MCF 10A (cell line): ENCODE measurements at regions of chr3 and their contacts with region 1.

Region 1: DNA sequence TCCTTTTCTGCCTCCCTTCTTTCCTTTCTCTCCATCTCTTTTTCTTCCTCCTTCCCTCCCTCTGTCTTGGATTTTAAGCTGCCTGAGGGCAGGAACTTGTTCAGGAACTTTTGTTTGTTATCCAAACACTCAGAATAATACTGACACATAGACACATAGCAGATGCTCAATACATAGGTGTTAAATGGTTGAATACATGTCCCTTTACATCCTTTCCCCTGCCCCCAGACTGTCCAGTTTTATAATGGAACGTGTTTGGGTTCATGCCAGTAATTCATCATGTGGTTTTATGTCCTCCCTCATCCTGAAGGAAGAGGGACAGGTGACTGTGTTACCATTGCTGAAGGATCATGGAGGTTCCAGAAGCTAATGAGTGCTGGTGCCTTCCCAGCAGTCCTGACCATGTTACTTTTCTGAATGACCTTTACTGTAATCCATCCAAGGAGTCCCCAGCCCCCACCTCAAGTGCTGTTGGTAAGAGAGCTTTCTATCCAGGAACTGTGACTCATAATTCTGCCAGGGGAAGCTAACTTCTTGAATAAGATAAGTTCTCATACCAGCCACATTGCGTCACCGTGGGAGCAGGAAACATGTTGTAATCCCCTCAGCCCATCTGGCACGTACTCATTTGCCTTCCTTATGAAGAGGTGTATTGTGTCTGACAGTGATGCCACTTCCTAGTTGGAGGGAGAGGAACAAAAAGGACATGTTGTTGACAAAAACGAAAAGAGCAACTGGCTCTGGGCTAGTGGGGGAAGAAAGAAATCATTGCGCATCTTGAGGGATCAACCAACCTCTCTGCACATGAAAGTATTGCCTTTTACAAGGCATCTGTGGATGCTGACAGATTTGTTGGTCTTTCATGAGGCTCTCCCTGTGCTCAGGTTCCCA is 52.4 kb downstream of the IL1RAP start:
- DNase-seq: peak; percentile 100
- H3K4me3 Mint-ChIP-seq: peak overlapping the region; percentile 48
- H3K27ac Mint-ChIP-seq: peak overlapping the region; percentile 66
- H3K4me1 Mint-ChIP-seq: peaks cover 20% of the 10 kb centered on the region
- H3K27me3 Mint-ChIP-seq: no peaks in the 10 kb centered on the region
- CTCF ChIP-seq: no peak

Region 2: GRCh38 chr3:189458532-189458931 is 1107.8 kb before region 1 on chr3:
- CTCF ChIA-PET with region 1: no interaction called
- POLR2A ChIA-PET with region 1: no interaction called
- intact Hi-C with region 1: no loop called
- DNase-seq: peak; percentile 80
- H3K4me3 Mint-ChIP-seq: peak overlapping the region; percentile 26
- H3K27ac Mint-ChIP-seq: peak overlapping the region; percentile 70
- H3K4me1 Mint-ChIP-seq: peaks cover 29% of the 10 kb centered on the region
- H3K27me3 Mint-ChIP-seq: no peaks in the 10 kb centered on the region
- CTCF ChIP-seq: no peak

Region 3: DNA sequence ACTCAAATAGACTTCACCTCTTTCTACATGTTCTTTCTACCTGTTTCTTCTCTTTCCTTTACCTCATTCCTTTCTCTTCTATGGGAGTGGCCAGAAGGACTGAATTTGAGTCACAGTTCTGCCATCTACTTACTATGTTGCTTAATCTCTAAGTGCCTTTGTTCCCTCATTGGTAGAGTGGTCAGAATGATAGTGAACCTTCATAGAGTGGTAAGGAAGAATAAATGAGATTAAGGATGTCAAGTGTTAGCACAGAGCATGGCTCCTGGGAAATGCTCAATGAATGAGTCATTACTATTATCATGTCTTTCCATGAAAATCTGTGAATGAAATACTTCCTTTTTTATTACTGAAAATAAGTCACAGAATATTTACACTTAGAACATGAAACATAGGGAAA is 134.1 kb before region 1 on chr3:
- CTCF ChIA-PET with region 1: no interaction called
- POLR2A ChIA-PET with region 1: no interaction called
- intact Hi-C with region 1: no loop called
- DNase-seq: peak; percentile 30
- H3K4me3 Mint-ChIP-seq: no peak overlapping the region
- H3K27ac Mint-ChIP-seq: no peak overlapping the region
- H3K4me1 Mint-ChIP-seq: peaks cover 18% of the 10 kb centered on the region
- H3K27me3 Mint-ChIP-seq: no peaks in the 10 kb centered on the region
- CTCF ChIP-seq: no peak

Region 4: GRCh38 chr3:190585805-190586630 is 19.7 kb after region 1 on chr3:
- CTCF ChIA-PET with region 1: no interaction called
- POLR2A ChIA-PET with region 1: interaction called, 18 read pairs
- intact Hi-C with region 1: no loop called
- DNase-seq: peak; percentile 97
- H3K4me3 Mint-ChIP-seq: peak overlapping the region; percentile 48
- H3K27ac Mint-ChIP-seq: peak overlapping the region; percentile 78
- H3K4me1 Mint-ChIP-seq: peaks cover 27% of the 10 kb centered on the region
- H3K27me3 Mint-ChIP-seq: no peaks in the 10 kb centered on the region
- CTCF ChIP-seq: no peak